Dendritic cell treated with granulocyte-macrophage colony-stimulating factor and Interleukin-4, amounts not matched to agents 40 ng/mL and 50 ng/mL, for 4 days (primary cell): ENCODE measurements at regions of chr4 and their contacts with region 1.

Region 1: GRCh38 chr4:86043755-86044592 is 315.9 kb downstream of the MAPK10 start:
- H3K4me3 Mint-ChIP-seq: no peak overlapping the region
- H3K27ac Mint-ChIP-seq: no peak overlapping the region
- H3K4me1 Mint-ChIP-seq: no peaks in the 10 kb centered on the region
- H3K27me3 Mint-ChIP-seq: no peaks in the 10 kb centered on the region

Region 2: DNA sequence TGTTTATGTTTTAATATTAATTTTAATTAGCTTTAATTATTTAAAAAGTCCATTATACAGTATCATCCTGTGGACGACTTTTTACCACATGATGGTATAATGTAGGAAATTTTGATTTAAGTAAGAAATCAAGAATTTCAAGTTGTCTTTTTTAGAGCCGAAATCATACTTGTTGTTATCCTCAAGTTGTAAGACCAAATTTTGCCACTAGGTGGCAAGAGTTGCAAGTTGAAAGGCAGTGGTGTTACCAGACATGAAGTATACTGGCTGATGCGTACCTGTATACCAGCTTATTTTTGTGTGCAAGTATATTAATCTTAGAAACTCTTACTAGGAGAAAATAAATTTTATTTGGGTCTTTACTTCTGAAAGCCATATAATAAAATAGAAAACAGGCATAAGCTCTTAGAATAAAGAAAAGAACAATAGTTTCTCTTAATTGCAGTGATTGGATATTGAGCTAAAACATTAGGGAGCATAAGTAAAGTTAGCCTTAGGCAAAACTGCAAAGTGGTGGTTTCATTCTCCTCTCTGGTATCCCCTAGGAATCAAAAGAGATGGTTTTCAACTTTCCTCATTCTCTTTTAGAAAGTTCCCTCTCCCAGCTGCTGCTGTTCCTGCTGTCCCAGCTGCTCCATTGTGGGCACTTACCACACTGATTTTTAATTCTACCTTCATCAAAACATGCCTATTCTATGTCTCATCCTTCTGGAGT is 959.4 kb before region 1 on chr4:
- intact Hi-C with region 1: loop called (anchors 2 kb)
- H3K4me3 Mint-ChIP-seq: no peak overlapping the region
- H3K27ac Mint-ChIP-seq: no peak overlapping the region
- H3K4me1 Mint-ChIP-seq: no peaks in the 10 kb centered on the region
- H3K27me3 Mint-ChIP-seq: no peaks in the 10 kb centered on the region

Region 3: DNA sequence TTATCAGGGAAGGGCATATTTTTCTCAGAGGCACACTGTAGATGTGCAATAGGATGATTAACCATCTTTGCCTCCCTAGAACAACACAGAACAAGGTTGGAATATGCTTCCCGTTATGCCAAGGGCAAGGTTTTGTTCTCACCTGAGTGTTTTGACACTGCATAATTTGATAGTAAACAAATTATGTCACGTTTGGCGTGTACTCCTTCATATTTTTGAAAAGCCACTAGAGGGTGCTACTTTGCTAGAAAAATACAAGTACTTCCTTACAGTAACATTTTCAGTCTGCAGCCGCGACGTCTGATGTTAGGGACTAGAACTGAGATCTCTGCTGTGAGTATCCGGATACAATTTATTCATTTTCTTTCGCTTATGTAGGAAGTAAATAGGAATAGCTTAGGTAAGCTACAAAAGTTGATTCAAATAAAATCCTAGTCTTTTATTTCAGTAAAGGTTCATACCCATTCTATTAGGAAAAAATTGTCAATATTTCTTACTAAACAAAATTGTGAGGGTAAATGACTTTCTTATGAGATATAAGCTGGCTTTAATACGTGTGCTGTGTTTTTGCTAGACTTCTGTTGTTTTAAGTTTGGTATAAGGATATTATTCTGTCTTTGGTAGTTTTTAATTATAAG is 896.4 kb before region 1 on chr4:
- intact Hi-C with region 1: loop called (anchors 5 kb)
- H3K4me3 Mint-ChIP-seq: no peak overlapping the region
- H3K27ac Mint-ChIP-seq: no peak overlapping the region
- H3K4me1 Mint-ChIP-seq: no peaks in the 10 kb centered on the region
- H3K27me3 Mint-ChIP-seq: peaks cover 10% of the 10 kb centered on the region

Region 4: GRCh38 chr4:85756938-85757337 is 287.0 kb before region 1 on chr4:
- intact Hi-C with region 1: loop called (anchors 2 kb)
- H3K4me3 Mint-ChIP-seq: no peak overlapping the region
- H3K27ac Mint-ChIP-seq: no peak overlapping the region
- H3K4me1 Mint-ChIP-seq: peaks cover 9% of the 10 kb centered on the region
- H3K27me3 Mint-ChIP-seq: no peaks in the 10 kb centered on the region

Region 5: GRCh38 chr4:85769009-85769408 is 275.0 kb before region 1 on chr4:
- intact Hi-C with region 1: no loop called
- H3K4me3 Mint-ChIP-seq: no peak overlapping the region
- H3K27ac Mint-ChIP-seq: no peak overlapping the region
- H3K4me1 Mint-ChIP-seq: no peaks in the 10 kb centered on the region
- H3K27me3 Mint-ChIP-seq: no peaks in the 10 kb centered on the region

Region 6: DNA sequence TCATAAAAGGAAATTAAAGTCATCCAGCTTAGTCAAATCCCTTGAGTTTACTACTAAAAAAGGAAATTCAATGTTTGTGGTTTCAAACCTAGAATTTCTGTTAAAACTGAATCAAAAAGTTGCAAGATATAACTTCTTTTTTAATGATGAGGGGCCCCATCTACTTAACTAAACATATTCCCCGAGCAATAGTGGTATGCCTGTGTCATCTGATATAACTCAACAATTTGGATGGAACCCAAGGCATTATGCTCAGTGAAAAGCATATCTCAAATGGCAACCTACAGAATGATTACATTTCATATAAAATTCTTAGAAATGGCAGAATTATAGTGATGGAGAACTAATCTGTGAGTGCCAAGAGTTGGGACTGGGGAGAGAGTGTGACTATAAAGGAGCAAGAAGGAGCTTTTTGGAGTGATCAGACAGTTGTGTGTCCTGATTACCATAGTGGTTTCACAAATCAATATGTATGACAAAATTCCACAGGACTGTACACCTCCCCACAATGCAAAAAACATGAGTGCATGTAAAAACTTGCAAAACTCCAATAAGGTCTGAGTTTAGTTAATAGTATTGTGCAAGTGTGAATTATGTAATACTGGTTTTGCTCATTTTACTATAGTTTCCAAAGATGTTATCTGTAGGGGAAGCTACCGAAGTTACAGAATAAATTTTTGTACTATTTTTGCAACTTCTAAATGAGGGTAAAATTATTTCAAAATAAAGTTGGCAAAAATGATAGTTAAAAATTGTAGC is 245.8 kb before region 1 on chr4:
- intact Hi-C with region 1: loop called (anchors 5 kb)
- H3K4me3 Mint-ChIP-seq: no peak overlapping the region
- H3K27ac Mint-ChIP-seq: no peak overlapping the region
- H3K4me1 Mint-ChIP-seq: peaks cover 6% of the 10 kb centered on the region
- H3K27me3 Mint-ChIP-seq: no peaks in the 10 kb centered on the region

Region 7: GRCh38 chr4:86006057-86006456 is 37.9 kb before region 1 on chr4:
- intact Hi-C with region 1: no loop called
- H3K4me3 Mint-ChIP-seq: no peak overlapping the region
- H3K27ac Mint-ChIP-seq: no peak overlapping the region
- H3K4me1 Mint-ChIP-seq: no peaks in the 10 kb centered on the region
- H3K27me3 Mint-ChIP-seq: no peaks in the 10 kb centered on the region